ENCODE measurements at regions of chr11 and their contacts with region 1.

Region 1: DNA sequence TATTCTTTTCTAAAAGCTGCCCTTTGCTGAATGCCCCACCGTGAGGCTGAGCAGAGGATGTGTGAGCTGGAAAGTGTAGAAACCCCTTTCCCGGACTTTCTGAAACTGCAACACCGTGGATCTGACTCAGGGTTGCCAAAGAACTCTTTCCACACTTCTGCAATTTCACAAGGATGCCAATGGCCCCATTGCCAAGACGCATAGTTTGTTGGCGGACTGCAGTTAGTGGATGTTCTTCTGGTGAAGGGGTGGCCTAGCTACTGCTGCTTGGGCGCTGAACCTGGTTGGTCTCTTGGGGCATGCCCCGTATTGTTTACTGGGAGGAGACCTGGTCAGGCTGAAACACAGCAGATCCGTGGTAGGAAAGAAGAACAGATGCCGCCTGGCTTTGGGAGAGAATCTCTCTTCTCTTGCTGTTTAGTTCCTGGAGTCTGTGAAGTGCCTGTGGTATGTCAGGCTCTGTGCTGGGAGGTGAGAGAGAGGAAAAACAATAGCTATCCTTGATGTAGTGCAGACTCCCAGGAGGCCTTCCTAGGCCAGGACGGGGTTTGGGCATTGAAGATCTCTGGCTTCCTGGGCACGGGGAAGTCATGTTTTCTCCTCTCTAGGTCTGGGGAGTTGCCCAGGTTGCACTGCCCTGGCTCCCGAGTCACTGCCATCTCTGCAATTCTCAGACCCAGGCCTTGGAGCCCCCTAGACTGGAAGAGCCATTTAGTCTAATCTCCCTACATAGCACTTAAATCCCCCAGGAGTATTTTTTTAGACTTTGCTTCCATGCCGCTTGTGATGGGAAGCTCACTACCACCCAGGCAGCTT is 26.9 kb downstream of the CD82 start:
- DNase-seq: peak; percentile 93 to 97 (median 95)
- H3K4me3 ChIP-seq: no peak overlapping the region
- H3K4me3 Mint-ChIP-seq: peak overlapping the region in 1 of 2 donors; percentile 22
- H3K27ac ChIP-seq: peak overlapping the region; percentile 73 to 77
- H3K27ac Mint-ChIP-seq: peak overlapping the region; percentile 91 to 99 (median 95)
- H3K4me1 ChIP-seq: peaks cover 27 to 30% of the 10 kb centered on the region in 2 donors
- H3K4me1 Mint-ChIP-seq: peaks cover 33% of the 10 kb centered on the region
- H3K27me3 ChIP-seq: no peaks in the 10 kb centered on the region
- H3K27me3 Mint-ChIP-seq: peaks cover 0 to 3% (median 0%) of the 10 kb centered on the region in 3 donors
- CTCF ChIP-seq: no peak

Region 2: GRCh38 chr11:44519989-44520737 is 72.2 kb before region 1 on chr11:
- intact Hi-C with region 1: no loop called
- DNase-seq: no peak
- H3K4me3 ChIP-seq: no peak overlapping the region
- H3K4me3 Mint-ChIP-seq: no peak overlapping the region
- H3K27ac ChIP-seq: no peak overlapping the region
- H3K27ac Mint-ChIP-seq: no peak overlapping the region
- H3K4me1 ChIP-seq: no peaks in the 10 kb centered on the region
- H3K4me1 Mint-ChIP-seq: peaks cover 5% of the 10 kb centered on the region
- H3K27me3 ChIP-seq: peaks cover 0 to 4% of the 10 kb centered on the region in 2 donors
- H3K27me3 Mint-ChIP-seq: peaks cover 6 to 26% (median 9%) of the 10 kb centered on the region in 3 donors
- CTCF ChIP-seq: no peak

Region 3: GRCh38 chr11:44574610-44575287 is 17.6 kb before region 1 on chr11:
- intact Hi-C with region 1: loop called in 1 of 2 experiments (anchors 2 kb)
- DNase-seq: peak in 2 of 3 donors; percentile 42 to 85
- H3K4me3 ChIP-seq: no peak overlapping the region
- H3K4me3 Mint-ChIP-seq: no peak overlapping the region
- H3K27ac ChIP-seq: no peak overlapping the region
- H3K27ac Mint-ChIP-seq: peak overlapping the region; percentile 2 to 86 (median 70)
- H3K4me1 ChIP-seq: peaks cover 52 to 72% of the 10 kb centered on the region in 2 donors
- H3K4me1 Mint-ChIP-seq: peaks cover 87% of the 10 kb centered on the region
- H3K27me3 ChIP-seq: no peaks in the 10 kb centered on the region
- H3K27me3 Mint-ChIP-seq: peaks cover 0 to 5% (median 0%) of the 10 kb centered on the region in 3 donors
- CTCF ChIP-seq: no peak

Measured in CD14-positive monocyte (primary cell).